ENCODE measurements at regions of chr20 and their contacts with region 1.

Region 1: DNA sequence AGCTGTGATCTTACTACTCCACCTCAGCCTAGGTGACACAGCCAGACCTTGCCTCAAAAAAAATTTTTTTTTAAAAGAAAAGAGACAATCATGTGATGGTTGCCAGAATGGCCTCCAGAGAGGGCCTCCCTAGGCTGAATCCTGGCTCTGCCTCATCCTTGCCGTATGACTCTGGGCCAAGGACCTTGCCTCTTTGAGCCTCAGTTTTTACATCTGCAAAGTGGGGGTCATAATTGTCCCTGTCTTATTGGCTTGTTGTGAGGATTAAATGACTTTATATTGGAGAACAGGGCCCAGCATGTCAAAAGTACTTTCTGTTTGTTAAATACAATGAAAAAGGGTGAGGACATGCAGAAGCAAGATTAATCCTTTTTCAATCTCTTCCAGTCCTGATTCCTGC is 14.4 kb downstream of the SRXN1 start:
- DNase-seq: no peak
- H3K4me3 ChIP-seq: no peak overlapping the region
- H3K27ac ChIP-seq: no peak overlapping the region
- H3K4me1 ChIP-seq: no peaks in the 10 kb centered on the region
- H3K27me3 ChIP-seq: peaks cover 8% of the 10 kb centered on the region; the same call in 1 of the 2 replicates
- CTCF ChIP-seq: no peak

Region 2: GRCh38 chr20:621125-621756 is 17.3 kb before region 1 on chr20:
- CTCF ChIA-PET with region 1: interaction called, 11 read pairs
- POLR2A ChIA-PET with region 1: no interaction called
- intact Hi-C with region 1: no loop called
- DNase-seq: no peak
- H3K4me3 ChIP-seq: no peak overlapping the region
- H3K27ac ChIP-seq: no peak overlapping the region
- H3K4me1 ChIP-seq: no peaks in the 10 kb centered on the region
- H3K27me3 ChIP-seq: peaks cover 86% of the 10 kb centered on the region
- CTCF ChIP-seq: no peak

Region 3: DNA sequence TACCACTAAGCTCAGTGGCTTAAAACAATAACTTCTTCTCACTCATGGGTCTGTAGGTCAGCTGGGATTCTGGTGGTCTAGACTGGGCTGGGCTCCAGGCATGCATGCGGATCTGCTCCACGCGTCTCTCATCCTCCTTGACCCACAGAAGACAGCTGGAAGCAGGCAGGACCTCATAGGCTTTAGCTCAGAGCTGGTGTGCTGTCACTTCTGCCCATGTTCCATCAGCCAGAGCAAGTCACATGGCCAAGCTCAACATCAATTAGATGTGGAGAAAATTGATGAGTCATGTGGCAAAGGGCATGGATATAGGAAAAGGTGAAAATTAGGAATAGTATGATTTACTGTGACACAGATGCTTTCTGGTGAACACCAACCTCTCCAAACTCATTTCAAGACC is 422.4 kb after region 1 on chr20:
- CTCF ChIA-PET with region 1: no interaction called
- POLR2A ChIA-PET with region 1: no interaction called
- intact Hi-C with region 1: no loop called
- DNase-seq: no peak
- H3K4me3 ChIP-seq: no peak overlapping the region
- H3K27ac ChIP-seq: no peak overlapping the region
- H3K4me1 ChIP-seq: no peaks in the 10 kb centered on the region
- H3K27me3 ChIP-seq: peaks cover 33% of the 10 kb centered on the region
- CTCF ChIP-seq: no peak